AG04450 (cell line): ENCODE measurements at regions of chr21 and their contacts with region 1.

Region 1: DNA sequence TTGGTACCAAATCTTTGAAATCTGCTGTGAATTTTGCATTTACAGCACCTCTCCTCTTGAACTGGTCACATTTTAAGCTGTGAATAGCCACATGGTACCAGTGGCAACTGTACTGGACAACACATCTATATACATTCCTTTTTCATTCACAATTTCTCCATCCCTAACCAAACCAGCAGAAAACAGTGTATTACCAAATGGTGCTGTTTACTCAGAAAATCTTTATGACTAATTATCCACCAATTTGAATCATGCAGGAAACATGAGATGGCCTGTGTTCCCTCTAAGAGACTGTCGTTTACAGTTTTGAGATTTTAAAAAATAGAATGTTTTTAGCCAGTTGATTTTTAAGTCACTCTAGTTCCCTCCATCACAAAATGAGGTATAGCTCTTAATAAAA is 17.6 kb upstream of the CCT8 start:
- DNase-seq: peak; percentile 37
- H3K4me3 ChIP-seq: no peak overlapping the region
- H3K27ac ChIP-seq: peak overlapping the region; percentile 55
- H3K27me3 ChIP-seq: no peaks in the 10 kb centered on the region
- CTCF ChIP-seq: no peak

Region 2: GRCh38 chr21:29077651-29078090 is 13.4 kb before region 1 on chr21:
- CTCF ChIA-PET with region 1: interaction called, 10 read pairs
- POLR2A ChIA-PET with region 1: no interaction called
- DNase-seq: no peak
- H3K4me3 ChIP-seq: peak overlapping the region; percentile 53
- H3K27ac ChIP-seq: peak overlapping the region; percentile 70
- H3K27me3 ChIP-seq: no peaks in the 10 kb centered on the region
- CTCF ChIP-seq: no peak

Region 3: DNA sequence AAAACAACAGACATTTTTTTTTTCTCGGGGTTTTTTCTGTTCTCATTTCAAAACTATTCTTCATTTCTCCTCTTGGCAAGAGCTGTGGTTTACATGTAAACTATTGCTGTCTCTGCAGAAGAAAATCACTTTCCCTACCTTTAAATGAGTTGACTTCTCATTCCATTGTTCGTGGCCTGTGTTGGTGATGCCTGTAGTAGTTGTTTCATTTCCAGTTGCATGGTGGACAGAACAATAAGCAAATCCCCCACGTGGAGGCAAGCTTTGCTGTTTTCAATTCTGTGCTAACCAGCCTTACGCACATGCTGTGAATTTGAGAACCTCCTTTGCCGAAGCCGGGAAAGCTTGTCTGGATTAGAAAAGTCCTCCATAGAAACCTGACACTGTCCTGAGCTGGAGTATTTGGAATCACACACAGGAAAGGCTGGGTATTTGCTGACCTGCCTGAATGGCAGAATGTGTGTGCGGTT is 13.2 kb after region 1 on chr21:
- CTCF ChIA-PET with region 1: interaction called, 10 read pairs
- POLR2A ChIA-PET with region 1: interaction called, 3 read pairs
- DNase-seq: no peak
- H3K4me3 ChIP-seq: no peak overlapping the region
- H3K27ac ChIP-seq: no peak overlapping the region
- H3K27me3 ChIP-seq: no peaks in the 10 kb centered on the region
- CTCF ChIP-seq: no peak

Region 4: DNA sequence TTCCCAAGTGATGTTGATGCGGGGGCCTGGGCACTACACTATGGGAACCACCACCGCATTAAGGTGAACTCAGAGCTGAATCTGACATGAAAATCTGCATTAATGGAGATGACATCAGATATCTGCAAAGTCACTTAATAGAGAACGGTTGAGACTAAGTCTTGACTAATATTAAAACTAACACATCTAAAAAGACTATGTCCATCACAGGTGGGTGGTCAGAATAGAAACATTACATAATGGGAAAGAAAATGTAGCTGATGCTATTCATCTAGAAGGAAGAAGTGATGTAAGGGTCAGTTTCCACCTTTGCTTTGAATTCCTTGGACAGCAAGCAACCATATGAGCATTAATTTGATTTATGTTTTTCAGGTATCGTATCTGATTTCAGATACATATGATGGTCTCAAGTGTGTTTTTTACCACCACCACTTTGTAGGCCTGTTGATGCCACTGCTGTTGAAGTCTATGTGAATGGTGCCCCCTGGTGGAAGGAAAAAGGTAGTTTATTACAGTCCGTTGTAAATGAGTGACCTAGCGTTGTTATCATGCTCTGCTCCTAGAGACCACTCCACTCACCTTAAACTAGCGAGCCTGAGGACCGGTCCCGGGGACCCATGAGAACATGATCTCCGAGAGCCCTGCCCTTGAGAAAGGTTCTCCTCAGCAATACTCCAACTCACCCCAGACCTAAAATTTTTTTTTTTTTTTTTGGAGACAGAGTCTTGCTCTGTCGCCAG is 281.2 kb after region 1 on chr21:
- CTCF ChIA-PET with region 1: interaction called, 67 read pairs
- POLR2A ChIA-PET with region 1: no interaction called
- DNase-seq: peak; percentile 66
- H3K4me3 ChIP-seq: no peak overlapping the region
- H3K27ac ChIP-seq: no peak overlapping the region
- H3K27me3 ChIP-seq: no peaks in the 10 kb centered on the region
- CTCF ChIP-seq: peak; percentile 70

Region 5: GRCh38 chr21:29520171-29520570 is 429.1 kb after region 1 on chr21:
- CTCF ChIA-PET with region 1: no interaction called
- POLR2A ChIA-PET with region 1: no interaction called
- DNase-seq: no peak
- H3K4me3 ChIP-seq: no peak overlapping the region
- H3K27ac ChIP-seq: no peak overlapping the region
- H3K27me3 ChIP-seq: no peaks in the 10 kb centered on the region
- CTCF ChIP-seq: no peak